ENCODE measurements at regions of chr19 and their contacts with region 1.

Region 1: GRCh38 chr19:7829561-7830271 is at the start of gene EVI5L:
- DNase-seq: peak; percentile 100
- ATAC-seq: peak; percentile 83
- H3K4me3 Mint-ChIP-seq: peak within 1 kb of the TSS; percentile 86
- H3K27ac Mint-ChIP-seq: peak within 1 kb of the TSS; percentile 80
- H3K4me1 Mint-ChIP-seq: peaks cover 23% of the 10 kb centered on the region
- H3K27me3 Mint-ChIP-seq: no peaks in the 10 kb centered on the region
- CTCF ChIP-seq: no peak
- total RNA-seq, gene EVI5L: 9.2 and 12.8 TPM in 2 replicates

Region 2: DNA sequence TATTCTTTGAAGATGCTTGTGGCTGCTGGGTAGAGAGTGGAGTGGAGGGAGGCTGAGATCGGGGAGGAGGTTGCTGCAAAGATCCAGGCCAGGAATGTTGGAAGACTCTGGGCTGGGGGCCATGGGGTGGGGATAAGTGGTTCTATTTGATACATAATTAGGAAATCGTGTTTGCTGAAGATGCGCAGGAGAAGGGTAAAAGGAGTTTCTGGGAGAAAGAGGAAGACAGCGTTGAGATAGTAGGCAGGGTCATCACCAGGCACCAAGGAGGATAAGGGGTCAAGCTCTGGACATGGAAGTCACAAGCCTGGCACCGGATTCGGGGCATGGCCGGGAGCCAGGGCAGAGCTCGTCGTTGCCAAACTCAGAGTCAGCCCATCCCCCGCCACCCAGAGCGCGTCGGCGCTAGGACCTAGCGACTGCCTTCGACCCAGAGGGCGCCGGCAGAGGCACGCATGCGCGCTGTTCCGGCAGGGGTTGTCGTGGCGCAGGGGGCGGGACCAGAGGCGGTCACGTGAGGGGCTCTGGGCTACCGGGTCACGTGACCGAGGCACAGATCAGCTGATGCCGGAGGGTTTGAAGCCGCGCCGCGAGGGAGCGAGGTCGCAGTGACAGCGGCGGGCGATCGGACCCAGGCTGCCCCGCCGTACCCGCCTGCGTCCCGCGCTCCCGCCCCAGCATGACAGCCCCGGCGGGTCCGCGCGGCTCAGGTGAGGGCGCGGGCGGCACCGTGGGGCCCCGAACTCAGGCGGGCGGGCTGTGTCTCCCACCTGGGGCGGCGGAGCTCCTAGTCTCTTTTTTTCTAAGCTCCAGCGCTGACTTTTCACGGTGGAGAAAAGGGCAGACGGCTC is 307.4 kb before region 1 on chr19 and contains the start of gene MCOLN1:
- CTCF ChIA-PET with region 1: no interaction called
- POLR2A ChIA-PET with region 1: no interaction called
- intact Hi-C with region 1: loop called (anchors 1 kb)
- DNase-seq: peak; percentile 99
- ATAC-seq: peak; percentile 91
- H3K4me3 Mint-ChIP-seq: peak within 1 kb of the TSS; percentile 81
- H3K27ac Mint-ChIP-seq: peak within 1 kb of the TSS; percentile 74
- H3K4me1 Mint-ChIP-seq: peaks cover 17% of the 10 kb centered on the region
- H3K27me3 Mint-ChIP-seq: no peaks in the 10 kb centered on the region
- CTCF ChIP-seq: no peak
- total RNA-seq, gene MCOLN1: 13.4 and 13.7 TPM in 2 replicates

Region 3: GRCh38 chr19:7658219-7658686 is 171.5 kb before region 1 on chr19:
- CTCF ChIA-PET with region 1: no interaction called
- POLR2A ChIA-PET with region 1: no interaction called
- intact Hi-C with region 1: loop called (anchors 1 kb)
- DNase-seq: no peak
- ATAC-seq: peak; percentile 98
- H3K4me3 Mint-ChIP-seq: peak overlapping the region; percentile 70
- H3K27ac Mint-ChIP-seq: peak overlapping the region; percentile 82
- H3K4me1 Mint-ChIP-seq: peaks cover 18% of the 10 kb centered on the region
- H3K27me3 Mint-ChIP-seq: peaks cover 5% of the 10 kb centered on the region
- CTCF ChIP-seq: no peak

Region 4: GRCh38 chr19:7808133-7808532 is 21.6 kb before region 1 on chr19:
- CTCF ChIA-PET with region 1: no interaction called
- POLR2A ChIA-PET with region 1: no interaction called
- intact Hi-C with region 1: loop called (anchors 1 kb)
- DNase-seq: no peak
- ATAC-seq: no peak
- H3K4me3 Mint-ChIP-seq: no peak overlapping the region
- H3K27ac Mint-ChIP-seq: peak overlapping the region; percentile 51
- H3K4me1 Mint-ChIP-seq: peaks cover 19% of the 10 kb centered on the region
- H3K27me3 Mint-ChIP-seq: peaks cover 5% of the 10 kb centered on the region
- CTCF ChIP-seq: no peak

Region 5: DNA sequence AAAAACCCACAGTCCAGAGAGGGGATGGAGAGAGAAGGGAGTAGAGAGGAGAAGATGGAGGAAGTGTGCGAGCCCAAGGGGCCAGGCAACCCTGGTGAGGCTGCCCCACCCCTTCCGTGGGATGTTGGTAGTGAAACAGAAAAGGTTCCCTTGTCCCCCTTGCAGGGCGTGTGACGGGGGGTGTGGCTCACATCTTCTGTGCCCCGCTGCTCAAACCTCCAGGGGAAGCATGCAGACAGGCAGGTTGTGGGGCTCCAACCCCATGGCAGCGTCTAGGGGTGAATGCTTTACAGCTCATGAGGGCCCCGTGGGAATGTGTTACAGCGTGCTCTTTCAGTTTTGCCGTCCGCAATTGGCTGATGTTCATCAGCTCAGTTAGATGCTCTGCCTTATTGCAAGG is 14.4 kb before region 1 on chr19:
- CTCF ChIA-PET with region 1: interaction called, 3 read pairs
- POLR2A ChIA-PET with region 1: interaction called, 7 read pairs
- intact Hi-C with region 1: loop called (anchors 1 kb)
- DNase-seq: peak; percentile 35
- ATAC-seq: peak; percentile 77
- H3K4me3 Mint-ChIP-seq: peak overlapping the region; percentile 71
- H3K27ac Mint-ChIP-seq: peak overlapping the region; percentile 76
- H3K4me1 Mint-ChIP-seq: peaks cover 37% of the 10 kb centered on the region
- H3K27me3 Mint-ChIP-seq: peaks cover 5% of the 10 kb centered on the region
- CTCF ChIP-seq: no peak

Region 6: GRCh38 chr19:7868676-7869452 is 39.1 kb after region 1 on chr19:
- CTCF ChIA-PET with region 1: no interaction called
- POLR2A ChIA-PET with region 1: interaction called, 4 read pairs
- intact Hi-C with region 1: loop called (anchors 1 kb)
- DNase-seq: peak; percentile 83
- ATAC-seq: peak; percentile 75
- H3K4me3 Mint-ChIP-seq: peak overlapping the region; percentile 81
- H3K27ac Mint-ChIP-seq: peak overlapping the region; percentile 73
- H3K4me1 Mint-ChIP-seq: peaks cover 41% of the 10 kb centered on the region
- H3K27me3 Mint-ChIP-seq: peaks cover 30% of the 10 kb centered on the region
- CTCF ChIP-seq: peak; percentile 56

Region 7: DNA sequence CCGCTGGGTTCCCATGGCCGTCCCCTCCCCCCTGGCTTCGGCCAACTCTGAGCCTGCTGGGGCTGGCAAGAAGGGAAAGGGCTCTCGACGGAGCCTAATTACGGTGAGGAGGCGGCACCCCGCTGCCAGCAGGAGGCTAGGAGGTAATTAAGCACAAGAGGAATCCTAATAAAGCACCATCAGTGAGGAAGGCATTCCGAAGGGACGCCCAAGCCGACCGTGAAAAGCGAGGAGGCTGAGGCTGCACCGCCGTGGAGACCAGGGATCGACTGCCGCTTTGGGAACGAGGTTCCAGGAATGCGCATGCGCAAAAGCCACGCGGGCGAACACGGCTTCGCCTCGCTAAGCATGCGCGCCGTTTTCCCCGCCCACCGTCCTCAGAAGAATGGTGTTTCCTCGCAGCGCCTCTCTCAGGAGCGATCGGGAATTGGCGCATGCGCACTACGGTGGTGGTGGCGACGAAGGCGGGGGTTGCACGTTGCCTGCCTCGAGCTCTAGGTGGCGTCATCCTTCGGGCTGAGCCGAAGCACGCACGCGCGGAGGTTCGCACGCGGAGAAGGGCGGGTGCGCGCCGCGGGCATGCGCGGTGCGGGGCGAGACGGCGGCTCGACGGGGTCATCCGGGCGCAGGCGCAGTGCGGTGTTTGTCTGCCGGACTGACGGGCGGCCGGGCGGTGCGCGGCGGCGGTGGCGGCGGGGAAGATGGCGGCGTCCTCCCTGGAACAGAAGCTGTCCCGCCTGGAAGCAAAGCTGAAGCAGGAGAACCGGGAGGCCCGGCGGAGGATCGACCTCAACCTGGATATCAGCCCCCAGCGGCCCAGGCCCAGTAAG is 73.7 kb after region 1 on chr19 and contains the start of gene MAP2K7:
- CTCF ChIA-PET with region 1: no interaction called
- POLR2A ChIA-PET with region 1: no interaction called
- intact Hi-C with region 1: loop called (anchors 1 kb)
- DNase-seq: peak; percentile 99
- ATAC-seq: peak; percentile 91
- H3K4me3 Mint-ChIP-seq: peak within 1 kb of the TSS; percentile 89
- H3K27ac Mint-ChIP-seq: peak within 1 kb of the TSS; percentile 91
- H3K4me1 Mint-ChIP-seq: peaks cover 33% of the 10 kb centered on the region
- H3K27me3 Mint-ChIP-seq: no peaks in the 10 kb centered on the region
- CTCF ChIP-seq: no peak
- total RNA-seq, gene MAP2K7: 46.3 and 52.8 TPM in 2 replicates

Measured in activated B cell treated with CpG ODN at 0.5 μM for 24 hours (primary cell).